ENCODE measurements at regions of chr10 and their contacts with region 1.

Region 1: GRCh38 chr10:102752934-102753664 is 9.4 kb downstream of the WBP1L start:
- DNase-seq: no peak
- H3K4me3 ChIP-seq: peak overlapping the region in 1 of 4 donors; percentile 7
- H3K27ac ChIP-seq: peak overlapping the region; percentile 84 to 90 (median 86)
- H3K4me1 ChIP-seq: peaks cover 24 to 80% (median 67%) of the 10 kb centered on the region in 4 donors
- H3K27me3 ChIP-seq: no peaks in the 10 kb centered on the region
- CTCF ChIP-seq: peak; percentile 55 to 69 (median 64)
- EP300 ChIP-seq: no peak
- POLR2A ChIP-seq: no peak

Region 2: DNA sequence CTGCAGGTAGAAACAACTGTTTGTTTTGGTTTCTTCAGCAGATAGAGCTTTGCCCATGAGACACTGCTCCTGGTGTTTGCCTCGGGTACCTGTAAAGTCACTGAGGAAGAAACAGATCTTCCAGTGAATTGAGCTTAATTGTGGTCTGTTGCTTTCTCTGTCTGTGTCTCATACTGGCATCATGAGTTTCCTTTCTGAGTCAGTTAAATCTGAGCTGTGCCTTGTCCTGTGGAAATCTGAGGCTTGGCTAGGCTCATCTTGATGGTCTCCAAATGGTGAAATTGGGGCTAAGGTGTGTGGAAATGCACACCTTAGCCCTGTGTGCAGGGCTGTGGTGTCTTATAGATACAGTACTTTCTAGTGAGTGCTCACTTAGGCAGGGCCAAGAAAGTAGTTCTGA is 440.4 kb before region 1 on chr10:
- intact Hi-C with region 1: no loop called
- DNase-seq: no peak
- H3K4me3 ChIP-seq: no peak overlapping the region
- H3K27ac ChIP-seq: peak overlapping the region; percentile 54 to 62 (median 56)
- H3K4me1 ChIP-seq: peaks cover 34 to 67% (median 51%) of the 10 kb centered on the region in 4 donors
- H3K27me3 ChIP-seq: no peaks in the 10 kb centered on the region
- CTCF ChIP-seq: no peak
- EP300 ChIP-seq: no peak
- POLR2A ChIP-seq: no peak

Region 3: DNA sequence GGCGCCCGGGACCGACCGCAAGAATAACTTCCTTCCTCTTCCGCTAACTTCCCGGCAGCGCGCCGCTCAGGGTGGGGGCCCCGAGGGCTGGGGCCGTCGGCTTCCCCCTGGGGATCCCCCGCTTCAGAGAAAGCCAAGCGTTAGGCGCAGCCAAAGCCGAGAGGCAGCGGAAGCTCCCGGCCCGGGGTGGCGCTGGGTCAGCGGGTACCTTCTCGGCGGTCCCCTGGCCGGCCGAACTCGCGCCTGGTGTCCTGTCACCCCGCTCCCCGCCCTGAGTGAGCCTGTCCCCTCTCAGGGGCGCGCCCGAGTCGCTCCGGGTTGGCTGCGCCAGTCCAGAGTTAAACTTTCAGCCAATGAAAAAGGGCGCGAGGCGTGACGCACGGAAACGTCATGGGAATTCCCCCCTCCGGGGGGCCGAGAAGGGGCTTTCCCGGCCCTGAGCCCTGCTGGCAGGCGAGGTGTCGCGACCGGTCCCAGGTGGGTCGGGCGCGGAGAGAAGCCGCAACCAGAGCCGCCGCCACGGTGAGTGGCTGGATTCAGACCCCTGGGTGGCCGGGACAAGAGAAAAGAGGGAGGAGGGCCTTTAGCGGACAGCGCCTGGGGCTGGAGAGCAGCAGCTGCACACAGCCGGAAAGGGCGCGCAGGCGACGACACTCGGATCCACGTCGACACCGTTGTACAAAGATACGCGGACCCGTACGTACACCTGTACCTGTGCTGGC is 358.9 kb before region 1 on chr10:
- intact Hi-C with region 1: no loop called
- DNase-seq: peak; percentile 98
- H3K4me3 ChIP-seq: peak overlapping the region; percentile 70 to 88 (median 72)
- H3K27ac ChIP-seq: peak overlapping the region; percentile 95 to 99 (median 98)
- H3K4me1 ChIP-seq: peaks cover 25 to 55% (median 52%) of the 10 kb centered on the region in 4 donors
- H3K27me3 ChIP-seq: no peaks in the 10 kb centered on the region
- CTCF ChIP-seq: peak in 2 of 3 experiments; percentile 29 to 94
- EP300 ChIP-seq: no peak
- POLR2A ChIP-seq: peak; percentile 77

Region 4: DNA sequence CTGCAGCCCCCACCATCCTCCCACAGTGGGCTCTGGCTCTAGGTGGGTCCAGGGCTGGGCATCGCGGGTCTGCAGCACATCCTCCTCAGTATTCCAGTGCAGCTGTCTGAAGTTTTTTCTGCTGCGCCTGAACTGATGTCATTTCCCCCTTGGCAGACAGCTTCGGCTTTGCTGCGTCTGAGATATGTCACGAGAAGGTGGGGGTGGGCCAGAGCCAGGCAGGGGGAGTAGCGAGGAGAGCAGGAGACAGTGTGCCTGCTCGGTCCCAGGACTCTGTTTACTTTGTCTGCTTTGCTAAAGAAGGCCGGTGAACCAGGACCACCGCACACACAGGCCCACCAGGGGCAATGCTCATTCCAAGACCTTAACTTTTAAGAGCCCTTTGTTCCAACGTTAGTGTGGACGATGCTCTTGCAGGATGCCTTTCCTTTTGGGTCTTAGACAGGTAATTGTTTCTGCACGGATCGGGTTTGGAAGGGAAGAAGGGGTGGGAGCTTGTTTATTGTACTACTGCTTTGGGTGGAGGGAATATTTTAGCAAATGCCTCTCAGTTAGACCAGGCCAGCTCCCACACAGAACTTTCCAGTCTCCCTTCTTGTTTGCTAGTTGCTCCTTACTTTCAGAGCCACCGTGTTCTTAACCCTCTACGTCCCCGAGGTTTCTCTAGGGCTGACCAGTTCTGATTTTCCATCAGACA is 23.0 kb after region 1 on chr10:
- intact Hi-C with region 1: loop called (anchors 2 kb)
- DNase-seq: peak; percentile 96
- H3K4me3 ChIP-seq: peak overlapping the region; percentile 42 to 56 (median 52)
- H3K27ac ChIP-seq: peak overlapping the region; percentile 89 to 94 (median 92)
- H3K4me1 ChIP-seq: peaks cover 84 to 100% (median 100%) of the 10 kb centered on the region in 4 donors
- H3K27me3 ChIP-seq: no peaks in the 10 kb centered on the region
- CTCF ChIP-seq: no peak
- EP300 ChIP-seq: peak; percentile 44
- POLR2A ChIP-seq: peak; percentile 75